ENCODE measurements at regions of chr12 and their contacts with region 1.

Region 1: GRCh38 chr12:58774731-58775130 is 145.6 kb downstream of the LRIG3 start:
- DNase-seq: no peak
- H3K4me3 ChIP-seq: no peak overlapping the region
- CTCF ChIP-seq: no peak

Region 2: GRCh38 chr12:58681731-58682130 is 93.0 kb before region 1 on chr12:
- in situ Hi-C with region 1: no loop called
- DNase-seq: no peak
- H3K4me3 ChIP-seq: no peak overlapping the region
- CTCF ChIP-seq: no peak

Region 3: GRCh38 chr12:58711974-58712373 is 62.8 kb before region 1 on chr12:
- in situ Hi-C with region 1: loop called (anchors 10 kb)
- DNase-seq: peak; percentile 62
- H3K4me3 ChIP-seq: no peak overlapping the region
- CTCF ChIP-seq: no peak

Region 4: GRCh38 chr12:58728397-58728796 is 46.3 kb before region 1 on chr12:
- in situ Hi-C with region 1: no loop called
- DNase-seq: no peak
- H3K4me3 ChIP-seq: no peak overlapping the region
- CTCF ChIP-seq: no peak

Measured in astrocyte of the cerebellum (primary cell).